Head of caudate nucleus (tissue), 42 donors: ENCODE measurements at regions of chr7 and their contacts with region 1.

Region 1: GRCh38 chr7:31443457-31443856 is 70.4 kb upstream of the ITPRID1 start:
- DNase-seq: peak in 17 of 42 donors; percentile 9 to 65 (median 30)

Region 2: GRCh38 chr7:30920584-30921539 is 522.6 kb before region 1 on chr7:
- intact Hi-C with region 1: no loop called
- DNase-seq: peak in 21 of 42 donors; percentile 1 to 28 (median 7)

Region 3: GRCh38 chr7:31398815-31399214 is 44.6 kb before region 1 on chr7:
- intact Hi-C with region 1: no loop called
- DNase-seq: no peak

Region 4: GRCh38 chr7:31633894-31634494 is 190.5 kb after region 1 on chr7:
- intact Hi-C with region 1: loop called (anchors 10 kb)
- DNase-seq: peak in 41 of 42 donors; percentile 19 to 87 (median 62)

Region 5: DNA sequence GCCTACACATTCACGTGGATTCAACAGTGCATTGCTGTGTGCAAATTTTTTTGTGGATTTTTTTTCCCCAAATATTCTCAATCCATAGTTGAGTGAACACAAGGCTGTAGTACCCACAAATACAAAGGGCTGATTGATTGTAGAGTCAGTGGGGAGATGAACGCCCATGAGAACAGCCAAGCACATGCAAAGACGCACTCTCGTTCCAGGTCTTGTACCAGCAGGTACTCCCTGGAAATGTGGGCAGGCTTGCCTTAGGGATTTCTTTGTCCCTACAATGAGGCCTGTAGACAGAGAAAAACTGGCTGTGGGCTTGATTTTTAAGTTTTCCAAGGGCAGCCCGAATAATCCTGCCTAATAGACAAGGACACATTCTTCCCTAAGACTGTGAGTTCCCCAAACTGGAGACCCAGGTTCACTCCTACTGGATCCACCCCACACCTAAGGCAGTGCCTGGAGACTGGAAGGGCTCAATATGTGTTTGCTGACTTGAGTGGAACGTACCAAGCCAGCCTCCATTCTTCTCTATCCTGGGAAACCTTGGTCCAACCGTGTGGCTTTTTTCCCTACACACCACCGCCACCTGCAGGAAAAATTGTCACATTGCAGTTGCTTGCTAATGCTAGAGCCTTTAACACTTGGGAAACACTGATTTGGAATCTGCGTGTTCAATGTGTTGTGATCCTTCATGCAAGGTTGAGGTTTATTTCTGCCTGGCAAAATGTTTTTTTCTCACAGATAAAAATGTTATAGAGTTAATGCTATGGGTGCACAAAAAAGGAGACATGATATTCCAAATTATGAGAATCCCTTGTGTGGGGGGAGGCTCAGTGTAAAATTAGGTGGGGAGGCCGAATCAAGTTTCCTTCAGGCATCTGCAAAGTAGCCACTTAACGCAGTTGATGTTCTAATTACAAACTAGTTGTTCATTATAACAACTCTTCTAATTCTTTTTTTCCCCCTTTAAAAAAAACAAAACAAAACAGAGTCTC is 292.8 kb after region 1 on chr7:
- intact Hi-C with region 1: loop called (anchors 10 kb)
- DNase-seq: peak; percentile 37 to 92 (median 81)